BJ (cell line): ENCODE measurements at regions of chr12 and their contacts with region 1.

Region 1: GRCh38 chr12:121872546-121873215 is 14.0 kb upstream of the HPD start:
- DNase-seq: peak; percentile 77
- H3K4me3 ChIP-seq: no peak overlapping the region
- H3K27me3 ChIP-seq: no peaks in the 10 kb centered on the region
- CTCF ChIP-seq: no peak

Region 2: GRCh38 chr12:121773011-121773777 is 99.5 kb before region 1 on chr12:
- CTCF ChIA-PET with region 1: no interaction called
- POLR2A ChIA-PET with region 1: no interaction called
- DNase-seq: no peak
- H3K4me3 ChIP-seq: no peak overlapping the region
- H3K27me3 ChIP-seq: no peaks in the 10 kb centered on the region
- CTCF ChIP-seq: peak; percentile 90

Region 3: GRCh38 chr12:121888478-121889266 is 16.0 kb after region 1 on chr12 and contains the start of gene PSMD9:
- CTCF ChIA-PET with region 1: interaction called, 11 read pairs
- POLR2A ChIA-PET with region 1: interaction called, 3 read pairs
- DNase-seq: peak; percentile 85
- H3K4me3 ChIP-seq: peak within 1 kb of the TSS; percentile 77
- H3K27me3 ChIP-seq: no peaks in the 10 kb centered on the region
- CTCF ChIP-seq: peak; percentile 89
- polyA plus RNA-seq, gene PSMD9: 93.2 and 130 TPM in 2 replicates